GM13976 (cell line): ENCODE measurements at regions of chr4 and their contacts with region 1.

Region 1: DNA sequence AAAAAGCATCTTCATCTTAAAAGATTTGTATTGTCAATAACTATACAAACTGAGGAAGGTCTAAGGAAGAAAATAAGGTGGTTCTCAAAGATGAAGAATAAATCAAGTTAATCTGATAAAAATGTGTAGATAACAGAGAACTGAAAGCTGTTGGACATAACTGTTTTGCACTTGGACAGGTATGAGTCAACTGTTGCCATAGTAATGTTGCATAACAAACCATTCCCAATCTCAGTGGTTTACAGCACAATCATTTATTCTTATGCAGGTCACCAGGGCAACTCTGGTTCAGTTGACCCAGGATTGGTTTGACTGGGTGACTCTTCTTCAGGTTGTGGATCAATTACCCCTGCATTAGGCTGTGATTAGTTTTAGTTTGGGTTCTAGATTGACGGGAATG is 2197.7 kb downstream of the ARAP2 start:
- DNase-seq: no peak
- CTCF ChIP-seq: no peak

Region 2: GRCh38 chr4:33930497-33930896 is 116.1 kb before region 1 on chr4:
- in situ Hi-C with region 1: loop called (anchors 25 kb)
- DNase-seq: no peak
- CTCF ChIP-seq: no peak